Activated CD4-positive, alpha-beta memory T cell treated with anti-CD3 and anti-CD28 coated beads, Interleukin-2, amount 10 ng/mL, durations not matched to agents 7 days and 5 days (primary cell): ENCODE measurements at regions of chrX and their contacts with region 1.

Region 1: GRCh38 chrX:71365876-71366673 is at the start of gene TAF1:
- DNase-seq: peak; percentile 93
- H3K4me3 Mint-ChIP-seq: peak within 1 kb of the TSS; percentile 92
- H3K27ac Mint-ChIP-seq: peak within 1 kb of the TSS; percentile 99
- H3K4me1 Mint-ChIP-seq: peaks cover 30% of the 10 kb centered on the region
- H3K27me3 Mint-ChIP-seq: no peaks in the 10 kb centered on the region
- total RNA-seq, gene TAF1: 29.0 to 33.0 TPM

Region 2: GRCh38 chrX:70454441-70455365 is 911.4 kb before region 1 on chrX:
- CTCF ChIA-PET with region 1: no interaction called
- POLR2A ChIA-PET with region 1: no interaction called
- DNase-seq: peak; percentile 79
- H3K4me3 Mint-ChIP-seq: peak overlapping the region; percentile 82
- H3K27ac Mint-ChIP-seq: peak overlapping the region; percentile 84
- H3K4me1 Mint-ChIP-seq: peaks cover 45% of the 10 kb centered on the region
- H3K27me3 Mint-ChIP-seq: no peaks in the 10 kb centered on the region

Region 3: GRCh38 chrX:71181910-71182799 is 183.9 kb before region 1 on chrX:
- CTCF ChIA-PET with region 1: interaction called, 3 read pairs
- POLR2A ChIA-PET with region 1: interaction called, 31 read pairs
- DNase-seq: peak; percentile 86
- H3K4me3 Mint-ChIP-seq: peak overlapping the region; percentile 85
- H3K27ac Mint-ChIP-seq: peak overlapping the region; percentile 97
- H3K4me1 Mint-ChIP-seq: peaks cover 29% of the 10 kb centered on the region
- H3K27me3 Mint-ChIP-seq: no peaks in the 10 kb centered on the region

Region 4: GRCh38 chrX:71198066-71198465 is 168.0 kb before region 1 on chrX:
- CTCF ChIA-PET with region 1: no interaction called
- POLR2A ChIA-PET with region 1: interaction called, 21 read pairs
- DNase-seq: peak; percentile 17
- H3K4me3 Mint-ChIP-seq: peak overlapping the region; percentile 94
- H3K27ac Mint-ChIP-seq: peak overlapping the region; percentile 89
- H3K4me1 Mint-ChIP-seq: peaks cover 25% of the 10 kb centered on the region
- H3K27me3 Mint-ChIP-seq: no peaks in the 10 kb centered on the region

Region 5: DNA sequence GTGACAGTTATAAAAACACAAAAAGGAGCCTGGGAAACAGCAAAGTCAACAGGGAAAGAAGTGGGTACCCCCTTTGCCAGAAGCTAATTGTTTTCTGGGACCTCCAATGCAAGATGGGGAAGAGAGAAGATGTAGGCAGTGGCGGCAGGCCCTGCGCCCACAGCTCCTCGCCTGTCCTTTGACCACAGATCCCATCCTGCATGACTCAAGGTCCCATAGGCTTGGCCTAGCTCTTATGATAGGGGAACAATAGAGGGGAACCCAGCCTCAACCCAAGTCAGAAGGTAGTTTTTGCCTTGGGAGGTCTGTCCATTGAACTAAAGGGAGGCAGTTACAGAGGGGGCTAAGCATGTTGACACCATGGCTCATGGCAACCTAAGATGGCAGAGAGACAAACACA is 126.3 kb before region 1 on chrX:
- CTCF ChIA-PET with region 1: no interaction called
- POLR2A ChIA-PET with region 1: no interaction called
- DNase-seq: no peak
- H3K4me3 Mint-ChIP-seq: no peak overlapping the region
- H3K27ac Mint-ChIP-seq: no peak overlapping the region
- H3K4me1 Mint-ChIP-seq: no peaks in the 10 kb centered on the region
- H3K27me3 Mint-ChIP-seq: no peaks in the 10 kb centered on the region

Region 6: DNA sequence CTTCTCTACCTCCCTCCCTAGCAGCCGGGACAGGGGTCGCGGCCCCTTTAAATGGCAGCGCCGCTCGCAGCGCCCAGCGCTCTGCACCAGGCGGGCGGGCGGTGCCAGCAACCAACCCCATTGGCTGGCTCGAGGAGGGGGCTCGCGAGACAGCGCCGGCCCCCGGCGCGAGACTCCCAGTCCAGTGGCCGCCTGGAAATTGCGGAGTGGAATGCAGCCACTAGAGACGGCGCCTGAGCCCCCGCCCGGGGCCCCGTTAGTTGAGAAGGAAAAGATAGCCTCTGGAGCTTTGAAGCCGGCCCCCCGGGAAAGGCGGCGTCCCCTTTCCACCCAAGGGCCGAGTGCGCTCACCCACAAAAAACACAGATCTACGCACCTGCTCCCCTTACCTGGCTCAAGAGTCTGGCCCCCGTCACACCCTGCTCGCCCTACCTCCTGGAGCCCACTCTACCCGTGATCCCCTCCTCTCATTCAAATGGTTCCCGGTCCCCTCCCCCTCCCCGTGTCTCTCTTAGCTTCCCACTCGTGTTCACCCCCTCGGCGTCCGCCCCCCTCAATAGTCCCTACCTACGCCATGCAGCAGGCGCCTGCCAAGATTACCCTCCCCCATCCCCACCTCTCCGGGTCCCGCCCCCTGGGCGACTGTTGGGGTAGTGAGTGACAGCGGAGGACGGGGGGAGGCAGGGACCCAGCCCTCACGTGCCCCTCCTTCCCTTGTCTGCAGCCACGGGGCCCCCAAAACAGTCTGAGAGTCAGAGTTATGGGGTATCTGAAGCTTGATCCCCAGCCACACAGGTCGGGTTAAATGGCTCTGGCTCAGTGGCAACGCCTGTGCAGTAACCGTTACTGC is 111.8 kb before region 1 on chrX and contains the start of gene ZMYM3:
- CTCF ChIA-PET with region 1: interaction called, 4 read pairs
- POLR2A ChIA-PET with region 1: interaction called, 28 read pairs
- DNase-seq: peak; percentile 82
- H3K4me3 Mint-ChIP-seq: peak within 1 kb of the TSS; percentile 89
- H3K27ac Mint-ChIP-seq: peak within 1 kb of the TSS; percentile 75
- H3K4me1 Mint-ChIP-seq: peaks cover 33% of the 10 kb centered on the region
- H3K27me3 Mint-ChIP-seq: no peaks in the 10 kb centered on the region
- total RNA-seq, gene ZMYM3: 21.5 to 22.2 TPM

Region 7: DNA sequence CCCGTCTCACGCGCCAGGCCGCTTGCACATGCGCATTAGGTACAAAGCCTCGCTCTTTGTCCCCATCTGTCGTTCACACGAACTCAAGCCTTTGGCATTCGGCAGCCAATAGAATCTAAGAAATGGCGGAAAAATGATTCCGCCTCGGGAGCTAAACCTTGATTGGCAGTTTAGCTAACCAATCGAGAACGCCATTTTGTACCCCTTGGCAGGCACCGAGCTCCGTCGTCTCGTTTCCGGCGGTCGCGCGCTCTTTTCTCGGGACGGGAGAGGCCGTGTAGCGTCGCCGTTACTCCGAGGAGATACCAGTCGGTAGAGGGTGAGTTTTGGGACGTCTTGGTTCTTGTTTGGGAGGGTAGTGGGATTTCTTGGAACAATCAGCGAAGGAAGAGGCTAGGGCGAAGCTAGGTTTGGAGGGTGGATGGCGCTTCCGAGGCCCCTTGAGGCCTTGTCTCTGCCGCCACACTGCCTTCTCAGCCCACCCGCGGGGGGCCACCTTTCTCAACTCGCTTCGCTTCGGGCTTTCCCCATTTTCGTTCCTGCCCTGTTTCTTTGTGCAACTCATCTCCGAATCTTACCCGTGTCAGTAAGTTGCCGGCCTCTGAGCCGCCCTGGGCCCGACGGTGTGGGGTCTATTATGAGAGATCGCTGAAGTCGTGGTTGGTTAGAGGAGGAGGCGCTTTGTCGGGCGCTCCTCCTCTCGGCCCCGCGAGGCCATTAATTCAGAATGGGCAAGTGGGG is 82.5 kb before region 1 on chrX and contains the start of gene NONO:
- CTCF ChIA-PET with region 1: interaction called, 3 read pairs
- POLR2A ChIA-PET with region 1: interaction called, 45 read pairs
- DNase-seq: peak; percentile 86
- H3K4me3 Mint-ChIP-seq: peak within 1 kb of the TSS; percentile 97
- H3K27ac Mint-ChIP-seq: peak within 1 kb of the TSS; percentile 99
- H3K4me1 Mint-ChIP-seq: peaks cover 16% of the 10 kb centered on the region
- H3K27me3 Mint-ChIP-seq: peaks cover 4% of the 10 kb centered on the region
- total RNA-seq, gene NONO: 376 to 400 TPM

Region 8: DNA sequence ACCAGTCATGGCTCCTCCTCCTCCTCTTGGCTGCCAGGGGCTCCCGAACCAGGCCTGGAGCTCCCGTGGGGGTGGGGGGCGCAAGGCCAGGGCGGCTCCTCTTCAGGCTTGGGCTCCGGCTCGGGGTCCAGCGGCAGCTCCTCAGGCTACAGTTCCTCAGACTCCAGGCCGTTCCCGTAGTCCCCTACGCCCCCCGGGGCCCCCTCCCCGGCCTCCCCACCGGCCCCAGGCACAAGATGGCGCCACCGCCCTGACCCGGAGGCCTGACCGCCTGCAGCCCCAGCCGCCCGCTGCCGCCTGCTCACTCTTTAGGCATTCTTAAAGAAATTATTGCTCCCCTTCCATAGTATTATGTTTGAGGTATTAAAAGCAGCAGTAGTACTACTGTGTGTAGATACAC is 54.6 kb after region 1 on chrX:
- CTCF ChIA-PET with region 1: no interaction called
- POLR2A ChIA-PET with region 1: no interaction called
- DNase-seq: no peak
- H3K4me3 Mint-ChIP-seq: no peak overlapping the region
- H3K27ac Mint-ChIP-seq: no peak overlapping the region
- H3K4me1 Mint-ChIP-seq: no peaks in the 10 kb centered on the region
- H3K27me3 Mint-ChIP-seq: no peaks in the 10 kb centered on the region

Region 9: GRCh38 chrX:71492231-71493065 is 126.4 kb after region 1 on chrX:
- CTCF ChIA-PET with region 1: no interaction called
- POLR2A ChIA-PET with region 1: interaction called, 13 read pairs
- DNase-seq: peak; percentile 42
- H3K4me3 Mint-ChIP-seq: peak overlapping the region; percentile 75
- H3K27ac Mint-ChIP-seq: no peak overlapping the region
- H3K4me1 Mint-ChIP-seq: peaks cover 13% of the 10 kb centered on the region
- H3K27me3 Mint-ChIP-seq: no peaks in the 10 kb centered on the region